HCT116 (cell line): ENCODE measurements at regions of chr12 and their contacts with region 1.

Region 1: DNA sequence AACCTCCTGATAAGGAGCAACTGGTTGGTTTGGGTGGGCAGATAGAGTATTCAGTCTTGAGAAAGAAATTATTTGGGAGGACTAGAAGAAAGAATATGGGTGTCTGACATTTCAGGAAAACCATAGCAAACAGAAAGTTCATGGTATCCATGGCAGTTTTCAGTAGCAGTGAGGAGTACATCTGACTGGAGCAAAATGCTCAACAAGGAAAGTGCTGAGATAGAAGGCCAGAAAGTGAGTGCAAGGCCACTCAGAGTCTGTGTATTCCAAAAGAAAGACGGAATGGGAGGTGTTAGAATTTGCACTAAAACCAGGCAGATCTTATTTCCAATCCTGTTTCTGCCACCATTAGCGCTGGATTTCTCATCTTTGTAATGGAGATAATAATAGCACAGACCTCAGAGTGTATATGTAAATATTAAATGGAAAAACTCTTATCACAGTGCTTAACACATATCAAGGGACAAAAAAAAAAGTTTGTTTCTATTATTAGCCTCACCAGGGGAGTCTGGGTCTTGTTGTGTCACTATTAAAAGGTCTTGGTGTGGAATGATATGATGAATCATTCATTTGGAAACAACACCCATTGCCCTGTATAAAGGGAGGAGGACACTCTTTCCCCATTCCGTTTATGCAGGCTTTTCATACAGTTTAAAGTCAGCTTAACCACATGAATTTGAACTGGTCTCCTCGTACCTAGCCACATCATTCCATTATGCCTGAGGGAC is 349.8 kb downstream of the IPO8 start:
- DNase-seq: no peak
- ATAC-seq: no peak
- H3K4me3 ChIP-seq: no peak overlapping the region
- H3K27ac ChIP-seq: no peak overlapping the region
- H3K4me1 ChIP-seq: no peaks in the 10 kb centered on the region
- H3K27me3 ChIP-seq: no peaks in the 10 kb centered on the region
- CTCF ChIP-seq: no peak
- POLR2A ChIP-seq: no peak
- RAD21 ChIP-seq: no peak

Region 2: DNA sequence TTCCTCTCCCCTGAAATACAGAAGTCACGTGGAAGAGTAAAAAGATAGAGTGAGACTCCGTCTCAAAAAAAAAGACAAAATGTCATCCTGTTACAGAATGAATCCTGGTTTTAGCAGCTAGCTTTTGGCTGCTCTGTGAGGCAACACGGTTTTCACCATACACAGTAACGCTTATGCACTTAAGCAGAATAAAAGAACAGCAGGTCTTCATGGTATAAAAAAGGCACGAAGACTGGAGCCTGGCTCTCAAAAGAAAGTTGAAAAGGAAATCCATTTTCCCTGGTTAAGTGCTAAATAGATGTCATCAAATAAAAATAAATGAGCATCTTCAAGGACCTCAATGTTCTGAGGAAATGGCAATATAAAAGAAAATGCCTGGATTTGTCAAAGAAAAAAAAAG is 94.4 kb before region 1 on chr12:
- CTCF ChIA-PET with region 1: no interaction called
- POLR2A ChIA-PET with region 1: no interaction called
- RAD21 ChIA-PET with region 1: no interaction called
- intact Hi-C with region 1: loop called (anchors 1 kb)
- DNase-seq: no peak
- ATAC-seq: no peak
- H3K4me3 ChIP-seq: no peak overlapping the region
- H3K27ac ChIP-seq: no peak overlapping the region
- H3K4me1 ChIP-seq: no peaks in the 10 kb centered on the region
- H3K27me3 ChIP-seq: no peaks in the 10 kb centered on the region
- CTCF ChIP-seq: no peak
- POLR2A ChIP-seq: no peak
- RAD21 ChIP-seq: no peak

Region 3: DNA sequence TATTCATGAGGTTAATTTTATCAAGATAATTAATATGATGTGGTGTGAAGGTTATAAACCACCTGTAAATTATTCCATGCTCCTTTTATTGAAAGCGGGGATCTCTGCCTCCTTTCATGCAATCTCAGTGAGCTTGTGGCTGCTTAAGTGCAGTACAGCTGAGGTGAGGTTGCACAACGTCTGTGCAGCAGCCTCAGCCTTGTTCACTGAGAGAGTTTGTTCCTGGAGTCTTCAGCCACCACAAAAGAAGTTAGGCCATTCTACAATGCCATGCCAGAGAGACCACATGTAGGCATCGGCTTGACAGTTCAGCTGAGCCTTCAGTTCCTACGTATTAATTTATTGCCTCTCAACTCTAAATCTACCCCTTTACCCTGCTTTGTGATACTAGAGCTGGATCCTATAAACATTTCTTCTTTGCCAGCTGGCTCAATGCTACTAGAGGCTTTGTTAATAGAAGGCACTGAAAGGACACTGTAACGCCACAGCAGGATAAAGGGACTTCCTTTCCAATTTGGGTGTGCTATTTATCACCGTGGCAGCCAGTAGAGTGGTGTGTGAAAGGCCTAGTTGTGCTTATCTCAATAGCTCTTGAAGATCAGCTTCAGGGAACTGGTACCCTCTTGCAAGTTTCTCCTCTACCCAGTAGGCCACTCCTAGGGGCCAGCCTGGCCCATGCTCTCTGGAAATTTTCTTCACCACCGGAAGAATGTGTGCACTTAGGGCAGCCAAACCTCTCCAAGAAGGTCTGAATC is 12.0 kb after region 1 on chr12:
- CTCF ChIA-PET with region 1: no interaction called
- POLR2A ChIA-PET with region 1: no interaction called
- RAD21 ChIA-PET with region 1: no interaction called
- intact Hi-C with region 1: no loop called
- DNase-seq: no peak
- ATAC-seq: no peak
- H3K4me3 ChIP-seq: no peak overlapping the region
- H3K27ac ChIP-seq: no peak overlapping the region
- H3K4me1 ChIP-seq: no peaks in the 10 kb centered on the region
- H3K27me3 ChIP-seq: no peaks in the 10 kb centered on the region
- CTCF ChIP-seq: no peak
- POLR2A ChIP-seq: no peak
- RAD21 ChIP-seq: no peak